Ascending aorta (tissue), 2 donors: ENCODE measurements at regions of chr16 and their contacts with region 1.

Region 1: DNA sequence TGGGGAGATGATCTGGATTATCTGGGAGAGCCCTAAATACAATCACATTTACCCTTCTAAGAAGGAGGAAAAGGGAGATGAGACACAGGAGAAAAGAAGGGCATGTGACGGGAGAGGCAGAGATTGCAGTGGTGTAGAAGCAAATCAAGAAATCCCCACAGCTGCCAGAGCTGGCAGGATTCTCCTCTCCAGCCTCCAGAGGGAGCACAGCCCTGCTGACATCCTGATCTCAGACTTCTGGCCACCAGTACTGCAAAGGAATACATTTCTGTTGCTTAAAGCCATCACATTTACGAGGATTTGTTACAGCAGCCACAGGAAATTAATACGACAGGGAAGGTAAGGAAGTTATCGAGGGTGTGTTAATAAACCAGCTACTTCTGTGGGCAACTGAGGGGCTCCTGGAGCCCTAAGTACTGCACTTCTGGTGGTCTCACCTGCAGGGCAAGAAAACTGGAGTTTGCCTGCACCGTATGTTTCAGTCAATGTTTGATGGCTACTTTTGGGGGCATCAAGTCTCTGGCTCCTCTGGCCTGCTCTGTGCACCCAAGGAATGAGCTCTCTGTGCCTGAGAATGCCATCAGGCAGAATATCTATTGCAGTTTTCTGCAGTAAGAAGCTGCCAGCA is 22.9 kb upstream of the CDH13 start:
- DNase-seq: peak in 1 of 2 donors; percentile 80
- H3K4me3 ChIP-seq: no peak overlapping the region
- H3K27ac ChIP-seq: no peak overlapping the region
- H3K4me1 ChIP-seq: no peaks in the 10 kb centered on the region
- H3K27me3 ChIP-seq: no peaks in the 10 kb centered on the region
- CTCF ChIP-seq: peak; percentile 68 to 83 (median 83)

Region 2: DNA sequence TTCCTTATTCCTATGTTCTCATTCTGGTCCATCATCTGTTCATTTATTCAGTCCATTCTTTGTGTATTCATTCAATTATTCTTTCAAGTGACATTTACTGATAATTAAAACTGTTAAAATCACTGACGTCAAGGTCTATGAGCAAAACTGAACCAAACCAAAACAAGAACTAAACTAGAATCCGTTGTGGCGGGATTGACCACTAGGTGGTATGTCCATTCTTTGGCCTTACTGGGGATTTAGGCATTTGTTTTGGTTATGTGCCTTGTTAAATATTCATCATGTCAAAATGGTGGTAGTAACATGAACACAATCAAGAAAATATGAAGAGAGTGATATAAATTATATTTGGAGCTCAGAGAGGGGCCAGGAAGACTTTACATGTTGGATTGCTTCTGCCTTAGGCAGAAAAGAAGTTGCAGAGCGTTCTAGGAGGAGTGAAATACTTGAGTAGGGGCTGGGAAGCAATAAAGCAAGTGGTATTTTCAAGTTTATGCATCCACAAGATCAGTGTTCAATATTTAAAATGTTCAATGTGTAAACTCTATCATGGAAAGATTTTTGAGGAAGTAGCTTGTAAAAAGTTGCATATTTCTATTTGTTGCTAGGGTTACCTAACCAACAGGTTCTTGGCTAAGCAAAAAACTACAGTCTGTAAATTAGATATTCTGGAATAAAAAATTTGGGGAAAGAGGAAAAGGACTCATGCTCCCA is 151.8 kb after region 1 on chr16:
- intact Hi-C with region 1: no loop called
- DNase-seq: no peak
- H3K4me3 ChIP-seq: no peak overlapping the region
- H3K27ac ChIP-seq: peak overlapping the region; percentile 74 to 78
- H3K4me1 ChIP-seq: peaks cover 13 to 38% of the 10 kb centered on the region in 2 donors
- H3K27me3 ChIP-seq: no peaks in the 10 kb centered on the region
- CTCF ChIP-seq: no peak

Region 3: DNA sequence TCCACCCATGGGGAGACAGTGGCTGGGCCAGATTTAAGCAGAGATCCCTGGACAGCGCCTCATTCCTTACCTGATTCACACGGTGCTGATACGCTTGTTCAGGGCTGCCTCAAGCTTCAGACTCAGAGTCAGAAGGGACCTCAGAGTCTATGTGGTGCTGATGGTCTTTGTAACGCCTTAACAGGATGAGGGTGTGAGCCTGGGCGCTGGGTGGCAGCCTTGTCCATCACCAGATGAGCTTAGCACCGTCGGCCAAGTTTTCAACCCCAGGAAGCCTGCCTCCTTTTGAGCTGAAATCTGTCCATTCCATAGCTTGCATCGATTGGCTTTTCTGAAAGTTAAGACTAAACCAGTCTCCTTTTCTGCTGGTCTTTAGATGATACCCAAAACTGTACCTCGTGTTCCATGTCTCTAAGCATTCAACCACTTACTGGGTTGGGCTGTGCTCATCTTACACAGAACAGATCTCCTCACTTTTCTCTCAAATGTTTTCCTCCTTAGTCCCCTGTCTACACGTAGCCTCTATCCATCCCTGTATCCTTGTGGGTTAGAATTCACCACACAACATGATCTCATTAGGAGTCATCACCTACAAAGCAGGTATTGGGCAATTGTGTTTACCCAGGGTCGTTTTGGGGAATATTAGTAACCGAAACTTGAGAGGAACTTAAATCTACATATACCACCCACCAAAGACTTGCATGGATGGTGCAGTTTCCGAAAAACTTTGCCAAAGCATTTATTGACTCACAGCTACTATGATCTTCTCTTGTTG is 596.3 kb after region 1 on chr16:
- intact Hi-C with region 1: loop called (anchors 10 kb)
- DNase-seq: no peak
- H3K4me3 ChIP-seq: no peak overlapping the region
- H3K27ac ChIP-seq: no peak overlapping the region
- H3K4me1 ChIP-seq: no peaks in the 10 kb centered on the region
- H3K27me3 ChIP-seq: no peaks in the 10 kb centered on the region
- CTCF ChIP-seq: no peak

Region 4: DNA sequence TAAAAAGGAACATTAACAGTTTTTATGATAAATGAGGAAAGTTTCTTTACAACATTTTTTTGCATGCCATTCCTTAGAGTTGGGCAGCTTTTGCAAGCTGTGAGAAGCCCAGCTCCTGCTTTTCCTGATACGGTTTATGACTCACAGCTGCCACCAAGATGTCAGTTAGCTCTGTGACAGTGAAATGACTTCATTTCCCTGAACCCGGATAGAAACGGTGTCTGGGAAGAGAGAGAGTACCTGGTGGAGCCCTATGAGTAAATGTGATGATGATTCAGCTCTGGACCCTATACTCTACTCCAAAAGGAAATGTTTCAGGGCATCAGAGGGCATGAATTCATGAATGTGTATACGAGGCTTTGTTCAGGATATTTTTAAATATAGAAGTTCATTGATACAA is 837.6 kb after region 1 on chr16:
- intact Hi-C with region 1: loop called (anchors 10 kb)
- DNase-seq: no peak
- H3K4me3 ChIP-seq: no peak overlapping the region
- H3K27ac ChIP-seq: no peak overlapping the region
- H3K4me1 ChIP-seq: no peaks in the 10 kb centered on the region
- H3K27me3 ChIP-seq: no peaks in the 10 kb centered on the region
- CTCF ChIP-seq: peak in 1 of 3 experiments; percentile 16